ENCODE measurements at regions of chr18 and their contacts with region 1.

Region 1: DNA sequence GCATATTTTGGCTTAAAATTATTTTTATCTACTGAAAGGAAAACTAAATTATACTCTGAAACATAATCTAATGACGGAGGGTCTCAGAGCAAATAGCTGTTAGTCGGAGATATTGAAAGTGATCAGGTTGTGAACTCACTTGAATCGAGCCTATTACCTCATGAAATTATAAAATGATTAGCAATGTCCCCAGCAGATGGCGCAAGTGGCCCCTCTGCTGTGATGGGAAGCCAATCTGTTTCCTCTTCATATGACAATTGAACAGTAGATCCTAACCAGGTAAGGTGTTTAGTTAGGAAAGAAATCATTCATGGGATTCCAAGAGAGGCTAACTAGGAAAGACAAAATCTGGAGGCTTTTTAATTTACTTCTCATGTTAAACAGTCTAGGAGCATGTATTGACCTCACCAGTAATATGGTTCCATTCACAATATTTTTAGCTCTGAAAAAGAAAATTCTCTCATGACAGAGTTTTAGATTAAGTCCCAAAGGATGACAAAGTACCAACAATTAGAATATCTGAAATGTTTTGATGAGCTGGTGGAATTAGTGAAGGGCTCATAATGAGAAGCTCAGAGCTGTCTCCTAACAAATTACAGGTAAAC is 29.9 kb upstream of the MPPE1 start:
- DNase-seq: peak; percentile 74
- H3K27ac ChIP-seq: no peak overlapping the region
- CTCF ChIP-seq: peak; percentile 85

Region 2: DNA sequence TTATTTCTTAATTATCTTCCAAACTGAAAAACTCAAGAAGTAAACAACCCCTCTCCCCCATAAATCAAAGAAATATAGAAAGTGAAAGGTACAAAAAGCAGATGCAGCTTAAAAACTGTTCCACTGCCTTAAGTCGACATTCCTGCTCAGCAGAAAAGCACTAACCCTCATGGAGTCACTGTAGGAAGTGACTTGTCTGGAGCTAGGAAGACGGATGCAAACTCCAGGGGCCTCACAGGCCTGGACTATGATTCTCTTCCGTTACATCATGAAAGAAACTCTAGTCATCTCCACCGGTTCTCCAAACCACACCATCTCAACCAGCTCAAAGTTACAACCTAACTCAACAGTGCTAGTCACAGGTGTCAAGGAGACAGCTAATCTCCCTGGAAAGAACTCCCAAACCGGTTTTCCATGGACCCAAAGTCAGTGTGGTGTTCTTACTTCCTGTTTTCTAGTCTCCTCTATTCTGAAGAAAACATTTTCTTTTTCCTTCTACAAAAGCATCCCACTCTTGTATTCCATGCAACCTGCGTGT is 917.0 kb before region 1 on chr18:
- CTCF ChIA-PET with region 1: no interaction called
- POLR2A ChIA-PET with region 1: no interaction called
- DNase-seq: no peak
- H3K27ac ChIP-seq: no peak overlapping the region
- CTCF ChIP-seq: no peak

Region 3: GRCh38 chr18:11995445-11996189 is 57.6 kb after region 1 on chr18:
- CTCF ChIA-PET with region 1: interaction called, 67 read pairs
- POLR2A ChIA-PET with region 1: no interaction called
- DNase-seq: peak; percentile 67
- H3K27ac ChIP-seq: peak overlapping the region; percentile 75
- CTCF ChIP-seq: peak; percentile 69

Region 4: GRCh38 chr18:12005538-12006487 is 67.8 kb after region 1 on chr18:
- CTCF ChIA-PET with region 1: interaction called, 11 read pairs
- POLR2A ChIA-PET with region 1: no interaction called
- DNase-seq: peak; percentile 51
- H3K27ac ChIP-seq: peak overlapping the region; percentile 83
- CTCF ChIP-seq: no peak

Measured in RWPE1 (cell line).